ENCODE measurements at regions of chr2 and their contacts with region 1.

Region 1: GRCh38 chr2:218631837-218632236 is 24.1 kb downstream of the PLCD4 start:
- DNase-seq: peak; percentile 38
- H3K4me3 ChIP-seq: no peak overlapping the region
- H3K27ac ChIP-seq: no peak overlapping the region
- H3K4me1 ChIP-seq: no peaks in the 10 kb centered on the region
- H3K27me3 ChIP-seq: no peaks in the 10 kb centered on the region
- CTCF ChIP-seq: no peak

Region 2: GRCh38 chr2:218659258-218659987 is 27.6 kb after region 1 on chr2 and contains the starts of genes BCS1L and ZNF142:
- CTCF ChIA-PET with region 1: interaction called, 14 read pairs
- POLR2A ChIA-PET with region 1: no interaction called
- intact Hi-C with region 1: no loop called
- DNase-seq: peak; percentile 98
- H3K4me3 ChIP-seq: peak within 1 kb of the TSS; percentile 89
- H3K27ac ChIP-seq: peak within 1 kb of the TSS; percentile 85
- H3K4me1 ChIP-seq: peaks cover 6% of the 10 kb centered on the region
- H3K27me3 ChIP-seq: no peaks in the 10 kb centered on the region
- CTCF ChIP-seq: no peak
- total RNA-seq, gene BCS1L: 70.6 and 74.1 TPM in 2 replicates
- total RNA-seq, gene ZNF142: 53.3 and 65.3 TPM in 2 replicates

Region 3: GRCh38 chr2:218679119-218679518 is 47.3 kb after region 1 on chr2:
- CTCF ChIA-PET with region 1: no interaction called
- POLR2A ChIA-PET with region 1: no interaction called
- intact Hi-C with region 1: no loop called
- DNase-seq: no peak
- H3K4me3 ChIP-seq: no peak overlapping the region
- H3K27ac ChIP-seq: no peak overlapping the region
- H3K4me1 ChIP-seq: no peaks in the 10 kb centered on the region
- H3K27me3 ChIP-seq: no peaks in the 10 kb centered on the region
- CTCF ChIP-seq: no peak

Region 4: GRCh38 chr2:219388127-219388844 is 756.4 kb after region 1 on chr2:
- CTCF ChIA-PET with region 1: no interaction called
- POLR2A ChIA-PET with region 1: interaction called, 12 read pairs
- intact Hi-C with region 1: no loop called
- DNase-seq: peak; percentile 96
- H3K4me3 ChIP-seq: peak overlapping the region; percentile 27
- H3K27ac ChIP-seq: peak overlapping the region; percentile 41
- H3K4me1 ChIP-seq: no peaks in the 10 kb centered on the region
- H3K27me3 ChIP-seq: no peaks in the 10 kb centered on the region
- CTCF ChIP-seq: peak; percentile 59